HCT116 (cell line): ENCODE measurements at regions of chr15 and their contacts with region 1.

Region 1: DNA sequence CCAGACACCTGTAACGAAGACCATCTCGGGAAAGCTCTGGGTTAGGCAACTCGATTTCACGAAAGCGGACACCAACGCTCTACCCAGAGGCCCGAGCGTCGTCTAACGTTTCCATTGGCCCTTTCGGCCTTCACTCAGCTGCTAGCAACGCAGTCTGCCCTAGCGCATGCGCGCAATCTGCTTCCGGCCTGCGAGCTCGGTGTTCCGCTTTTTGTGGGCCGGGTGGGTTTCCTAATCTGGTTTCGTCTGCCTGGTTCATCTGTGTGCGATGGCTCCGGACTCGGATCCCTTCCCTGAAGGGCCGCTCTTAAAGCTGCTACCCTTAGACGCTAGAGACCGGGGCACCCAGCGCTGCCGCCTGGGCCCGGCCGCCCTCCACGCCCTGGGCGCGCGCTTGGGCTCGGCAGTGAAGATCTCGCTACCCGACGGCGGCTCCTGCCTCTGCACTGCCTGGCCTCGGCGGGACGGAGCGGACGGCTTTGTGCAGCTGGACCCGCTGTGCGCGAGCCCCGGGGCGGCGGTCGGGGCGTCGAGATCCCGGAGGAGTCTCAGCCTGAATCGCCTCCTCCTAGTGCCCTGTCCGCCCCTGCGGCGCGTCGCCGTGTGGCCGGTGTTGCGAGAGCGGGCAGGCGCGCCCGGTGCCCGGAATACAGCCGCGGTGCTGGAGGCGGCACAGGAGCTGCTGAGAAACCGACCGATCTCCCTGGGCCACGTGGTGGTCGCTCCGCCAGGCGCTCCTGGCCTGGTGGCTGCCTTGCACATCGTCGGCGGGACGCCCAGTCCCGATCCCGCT is 24.0 kb upstream of the GATM start:
- DNase-seq: peak; percentile 99
- ATAC-seq: peak; percentile 92
- H3K4me3 ChIP-seq: peak overlapping the region; percentile 78 to 86
- H3K27ac ChIP-seq: peak overlapping the region; percentile 97
- H3K4me1 ChIP-seq: peaks cover 5 to 15% of the 10 kb centered on the region in 2 experiments; a peak in 3 of 4 replicates
- H3K27me3 ChIP-seq: no peaks in the 10 kb centered on the region
- CTCF ChIP-seq: no peak
- POLR2A ChIP-seq: peak; percentile 97
- RAD21 ChIP-seq: no peak

Region 2: GRCh38 chr15:45198337-45199135 is 203.8 kb before region 1 on chr15:
- CTCF ChIA-PET with region 1: interaction called, 10 read pairs
- POLR2A ChIA-PET with region 1: interaction called, 7 read pairs
- RAD21 ChIA-PET with region 1: no interaction called
- intact Hi-C with region 1: loop called (anchors 1 kb)
- DNase-seq: peak; percentile 94
- ATAC-seq: peak; percentile 71
- H3K4me3 ChIP-seq: peak overlapping the region; percentile 58 to 62
- H3K27ac ChIP-seq: peak overlapping the region; percentile 76
- H3K4me1 ChIP-seq: peaks cover 11 to 36% of the 10 kb centered on the region in 2 experiments
- H3K27me3 ChIP-seq: no peaks in the 10 kb centered on the region
- CTCF ChIP-seq: peak in 2 of 3 experiments; percentile 79 to 86; a peak in 4 of 6 replicates
- POLR2A ChIP-seq: peak; percentile 52
- RAD21 ChIP-seq: no peak

Region 3: DNA sequence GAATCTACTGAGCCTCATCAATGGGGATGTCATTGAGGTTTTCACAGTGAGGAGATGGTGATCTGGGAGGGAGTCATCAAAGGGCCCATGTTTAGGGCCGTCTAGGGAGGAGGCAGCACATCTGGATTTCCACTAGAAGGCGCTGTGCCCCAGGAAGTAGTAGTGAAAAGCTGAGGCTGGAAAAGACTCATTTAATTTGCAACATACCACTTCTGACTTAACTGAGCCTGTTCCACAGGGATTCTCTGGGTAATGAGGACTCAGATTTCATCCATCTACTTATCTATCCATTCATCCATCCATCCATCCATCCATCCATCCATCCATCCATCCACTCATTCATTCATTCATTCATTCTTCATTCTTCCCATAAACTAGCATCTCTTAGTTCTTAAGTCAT is 197.2 kb before region 1 on chr15:
- CTCF ChIA-PET with region 1: interaction called, 10 read pairs
- POLR2A ChIA-PET with region 1: interaction called, 7 read pairs
- RAD21 ChIA-PET with region 1: no interaction called
- intact Hi-C with region 1: loop called (anchors 1 kb)
- DNase-seq: peak; percentile 58
- ATAC-seq: peak; percentile 49
- H3K4me3 ChIP-seq: no peak overlapping the region
- H3K27ac ChIP-seq: no peak overlapping the region
- H3K4me1 ChIP-seq: peaks cover 0 to 14% of the 10 kb centered on the region in 2 experiments; a peak in 2 of 4 replicates
- H3K27me3 ChIP-seq: no peaks in the 10 kb centered on the region
- CTCF ChIP-seq: peak in 2 of 3 experiments; percentile 96 to 97; a peak in 4 of 6 replicates
- POLR2A ChIP-seq: no peak
- RAD21 ChIP-seq: no peak

Region 4: GRCh38 chr15:45307230-45307924 is 95.0 kb before region 1 on chr15:
- CTCF ChIA-PET with region 1: no interaction called
- POLR2A ChIA-PET with region 1: no interaction called
- RAD21 ChIA-PET with region 1: no interaction called
- intact Hi-C with region 1: loop called (anchors 1 kb)
- DNase-seq: peak; percentile 32
- ATAC-seq: peak; percentile 67
- H3K4me3 ChIP-seq: peak overlapping the region in 1 of 2 experiments; percentile 40; a peak in 3 of 4 replicates
- H3K27ac ChIP-seq: no peak overlapping the region
- H3K4me1 ChIP-seq: peaks cover 0 to 4% of the 10 kb centered on the region in 2 experiments; a peak in 1 of 4 replicates
- H3K27me3 ChIP-seq: no peaks in the 10 kb centered on the region
- CTCF ChIP-seq: peak; percentile 45 to 68 (median 59); a peak in 5 of 6 replicates
- POLR2A ChIP-seq: no peak
- RAD21 ChIP-seq: peak; percentile 68

Region 5: DNA sequence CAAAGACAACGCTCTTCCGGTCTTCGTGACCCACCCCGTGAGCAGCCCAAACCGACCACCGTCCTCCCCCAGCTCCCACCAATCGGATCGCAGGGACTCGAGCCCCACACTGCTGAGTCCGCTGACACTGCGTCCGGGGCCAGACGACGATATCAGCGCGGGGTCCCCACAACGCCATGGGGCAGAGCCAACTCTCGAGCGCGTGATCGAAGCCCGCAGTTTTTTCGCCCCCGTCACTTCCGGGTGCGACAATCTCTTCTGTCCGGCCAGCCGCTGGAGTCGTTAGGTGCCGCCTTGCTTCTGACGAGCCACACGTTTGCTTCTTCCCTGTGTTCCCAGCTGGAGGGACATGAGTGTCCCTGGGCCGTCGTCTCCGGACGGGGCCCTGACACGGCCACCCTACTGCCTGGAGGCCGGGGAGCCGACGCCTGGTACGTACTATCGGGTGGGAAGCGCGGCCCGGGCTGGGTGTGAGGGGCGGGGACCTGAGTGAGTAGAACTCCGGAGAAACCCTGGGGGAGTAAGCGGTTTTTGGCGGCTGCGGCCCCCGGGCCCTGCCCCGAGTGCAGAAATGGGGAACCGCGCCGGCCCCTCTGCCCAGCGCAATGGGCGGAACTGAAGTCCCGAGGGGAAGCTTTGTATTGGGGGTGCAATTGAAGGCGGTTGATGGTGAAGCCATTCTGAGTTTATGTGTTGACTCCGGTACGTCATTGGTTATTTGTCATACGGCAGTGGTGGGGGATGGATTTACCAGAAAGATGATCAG is 184.9 kb after region 1 on chr15 and contains the start of gene BLOC1S6:
- CTCF ChIA-PET with region 1: no interaction called
- POLR2A ChIA-PET with region 1: interaction called, 9 read pairs
- RAD21 ChIA-PET with region 1: no interaction called
- intact Hi-C with region 1: loop called (anchors 1 kb)
- DNase-seq: peak; percentile 86
- ATAC-seq: peak; percentile 83
- H3K4me3 ChIP-seq: peak within 1 kb of the TSS; percentile 74 to 89
- H3K27ac ChIP-seq: peak within 1 kb of the TSS; percentile 93
- H3K4me1 ChIP-seq: peaks cover 7 to 18% of the 10 kb centered on the region in 2 experiments; a peak in 3 of 4 replicates
- H3K27me3 ChIP-seq: no peaks in the 10 kb centered on the region
- CTCF ChIP-seq: no peak
- POLR2A ChIP-seq: peak; percentile 85
- RAD21 ChIP-seq: no peak
- total RNA-seq, gene BLOC1S6: 40.7 TPM